Activated CD8-positive, alpha-beta T cell treated with anti-CD3 and anti-CD28 coated beads, Interleukin-2, amount 10 ng/mL, durations not matched to agents 7 days and 5 days (primary cell): ENCODE measurements at regions of chr15 and their contacts with region 1.

Region 1: GRCh38 chr15:65054333-65055200 is 9.4 kb downstream of the SLC51B start:
- DNase-seq: peak; percentile 77
- ATAC-seq: peak; percentile 66
- H3K4me3 Mint-ChIP-seq: no peak overlapping the region
- H3K27ac Mint-ChIP-seq: no peak overlapping the region
- H3K4me1 Mint-ChIP-seq: peaks cover 23% of the 10 kb centered on the region
- H3K27me3 Mint-ChIP-seq: peaks cover 5% of the 10 kb centered on the region

Region 2: DNA sequence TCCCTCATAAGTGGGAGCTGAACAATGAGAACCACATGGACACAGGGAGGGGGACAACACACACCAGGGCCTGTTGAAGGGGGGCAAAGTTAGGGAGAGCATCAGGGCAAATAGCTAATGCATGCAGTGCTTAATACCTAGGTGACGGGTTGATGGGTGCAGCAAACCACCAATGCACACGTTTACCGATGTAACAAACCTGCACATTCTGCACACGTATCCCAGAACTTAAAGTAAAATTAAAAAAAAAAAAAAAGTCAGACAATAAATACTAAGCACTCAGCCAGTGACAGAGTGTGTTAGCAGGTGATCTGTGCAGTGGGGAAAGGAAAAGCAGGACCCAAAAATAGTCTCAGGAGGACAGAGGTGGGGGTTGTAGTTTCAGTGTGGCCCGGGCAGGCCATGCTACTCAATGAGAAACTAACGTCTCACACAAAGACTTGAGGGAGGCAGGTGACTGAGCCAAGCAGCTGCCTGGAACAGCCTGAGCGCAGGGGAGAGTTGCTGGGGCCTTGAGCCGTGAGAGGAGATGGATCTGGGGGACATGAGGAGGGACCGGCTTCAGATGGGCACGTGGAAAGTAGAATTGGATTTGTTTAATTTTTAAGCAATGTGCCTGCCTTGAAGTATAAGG is 124.4 kb before region 1 on chr15:
- CTCF ChIA-PET with region 1: no interaction called
- POLR2A ChIA-PET with region 1: no interaction called
- DNase-seq: peak; percentile 6
- ATAC-seq: no peak
- H3K4me3 Mint-ChIP-seq: no peak overlapping the region
- H3K27ac Mint-ChIP-seq: no peak overlapping the region
- H3K4me1 Mint-ChIP-seq: peaks cover 13% of the 10 kb centered on the region
- H3K27me3 Mint-ChIP-seq: no peaks in the 10 kb centered on the region

Region 3: DNA sequence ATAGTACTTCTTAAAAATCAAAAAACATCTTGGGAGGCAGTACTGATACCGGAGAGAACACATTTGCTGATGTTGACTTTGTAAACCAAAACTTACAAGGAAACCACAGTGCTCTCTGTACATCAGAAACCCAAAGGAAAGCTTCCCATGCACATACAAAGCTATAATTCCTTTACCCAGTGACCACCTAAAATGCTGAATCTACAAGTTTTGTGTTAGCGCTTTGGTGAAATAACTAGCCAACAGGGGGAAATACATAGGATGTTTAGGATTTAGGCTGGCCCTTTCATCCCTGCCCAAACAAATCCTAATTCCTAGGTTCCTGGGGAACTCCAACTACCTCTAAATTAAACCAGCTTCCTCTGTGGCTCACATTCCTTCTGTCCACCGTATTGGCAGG is 49.6 kb before region 1 on chr15:
- CTCF ChIA-PET with region 1: no interaction called
- POLR2A ChIA-PET with region 1: no interaction called
- DNase-seq: no peak
- ATAC-seq: no peak
- H3K4me3 Mint-ChIP-seq: no peak overlapping the region
- H3K27ac Mint-ChIP-seq: no peak overlapping the region
- H3K4me1 Mint-ChIP-seq: no peaks in the 10 kb centered on the region
- H3K27me3 Mint-ChIP-seq: no peaks in the 10 kb centered on the region

Region 4: GRCh38 chr15:65032801-65033537 is 21.6 kb before region 1 on chr15:
- CTCF ChIA-PET with region 1: interaction called, 10 read pairs
- POLR2A ChIA-PET with region 1: no interaction called
- DNase-seq: peak; percentile 56
- ATAC-seq: peak; percentile 38
- H3K4me3 Mint-ChIP-seq: no peak overlapping the region
- H3K27ac Mint-ChIP-seq: no peak overlapping the region
- H3K4me1 Mint-ChIP-seq: peaks cover 20% of the 10 kb centered on the region
- H3K27me3 Mint-ChIP-seq: peaks cover 23% of the 10 kb centered on the region

Region 5: GRCh38 chr15:65066635-65067316 is 12.2 kb after region 1 on chr15:
- CTCF ChIA-PET with region 1: interaction called, 10 read pairs
- POLR2A ChIA-PET with region 1: no interaction called
- DNase-seq: no peak
- ATAC-seq: no peak
- H3K4me3 Mint-ChIP-seq: no peak overlapping the region
- H3K27ac Mint-ChIP-seq: no peak overlapping the region
- H3K4me1 Mint-ChIP-seq: no peaks in the 10 kb centered on the region
- H3K27me3 Mint-ChIP-seq: peaks cover 42% of the 10 kb centered on the region

Region 6: DNA sequence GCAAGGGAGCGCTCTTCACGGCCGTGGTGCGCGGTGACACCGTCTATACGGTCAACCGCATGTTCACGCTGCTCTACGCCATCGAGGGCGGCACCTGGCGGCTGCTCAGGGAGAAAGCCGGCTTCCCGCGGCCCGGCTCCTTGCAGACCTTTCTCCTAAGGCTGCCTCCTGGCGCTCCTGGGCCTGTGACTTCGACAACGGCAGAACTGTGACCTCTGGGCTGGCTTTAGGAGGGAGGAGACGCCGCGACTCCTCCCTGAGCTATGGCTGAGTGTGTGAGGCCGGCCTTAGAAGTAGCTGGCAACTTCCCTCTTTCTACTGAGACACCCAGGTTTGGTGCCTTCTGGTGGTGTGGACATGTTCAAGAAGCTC is 23.4 kb after region 1 on chr15:
- CTCF ChIA-PET with region 1: interaction called, 37 read pairs
- POLR2A ChIA-PET with region 1: no interaction called
- DNase-seq: peak; percentile 61
- ATAC-seq: peak; percentile 84
- H3K4me3 Mint-ChIP-seq: no peak overlapping the region
- H3K27ac Mint-ChIP-seq: no peak overlapping the region
- H3K4me1 Mint-ChIP-seq: peaks cover 21% of the 10 kb centered on the region
- H3K27me3 Mint-ChIP-seq: peaks cover 40% of the 10 kb centered on the region

Region 7: GRCh38 chr15:65086017-65086679 is 31.6 kb after region 1 on chr15:
- CTCF ChIA-PET with region 1: interaction called, 37 read pairs
- POLR2A ChIA-PET with region 1: no interaction called
- DNase-seq: peak; percentile 40
- ATAC-seq: no peak
- H3K4me3 Mint-ChIP-seq: no peak overlapping the region
- H3K27ac Mint-ChIP-seq: no peak overlapping the region
- H3K4me1 Mint-ChIP-seq: peaks cover 20% of the 10 kb centered on the region
- H3K27me3 Mint-ChIP-seq: peaks cover 18% of the 10 kb centered on the region

Region 8: GRCh38 chr15:65101411-65101890 is 46.9 kb after region 1 on chr15:
- CTCF ChIA-PET with region 1: interaction called, 11 read pairs
- POLR2A ChIA-PET with region 1: no interaction called
- DNase-seq: peak; percentile 64
- ATAC-seq: peak; percentile 47
- H3K4me3 Mint-ChIP-seq: no peak overlapping the region
- H3K27ac Mint-ChIP-seq: peak overlapping the region; percentile 14
- H3K4me1 Mint-ChIP-seq: no peaks in the 10 kb centered on the region
- H3K27me3 Mint-ChIP-seq: no peaks in the 10 kb centered on the region